MCF 10A (cell line): ENCODE measurements at regions of chr19 and their contacts with region 1.

Region 1: GRCh38 chr19:41310033-41310758 is at the start of gene CCDC97:
- DNase-seq: peak; percentile 86
- H3K4me3 Mint-ChIP-seq: peak within 1 kb of the TSS; percentile 87
- H3K27ac Mint-ChIP-seq: peak within 1 kb of the TSS; percentile 96
- H3K4me1 Mint-ChIP-seq: peaks cover 29% of the 10 kb centered on the region
- H3K27me3 Mint-ChIP-seq: no peaks in the 10 kb centered on the region
- CTCF ChIP-seq: no peak
- total RNA-seq, gene CCDC97: 25.0 and 28.5 TPM in 2 replicates

Region 2: GRCh38 chr19:41206926-41207750 is 103.1 kb before region 1 on chr19:
- CTCF ChIA-PET with region 1: interaction called, 30 read pairs
- POLR2A ChIA-PET with region 1: interaction called, 4 read pairs
- intact Hi-C with region 1: loop called (anchors 1 kb)
- DNase-seq: no peak
- H3K4me3 Mint-ChIP-seq: no peak overlapping the region
- H3K27ac Mint-ChIP-seq: peak overlapping the region; percentile 61
- H3K4me1 Mint-ChIP-seq: peaks cover 17% of the 10 kb centered on the region
- H3K27me3 Mint-ChIP-seq: no peaks in the 10 kb centered on the region
- CTCF ChIP-seq: no peak

Region 3: GRCh38 chr19:41321600-41322270 is 11.5 kb after region 1 on chr19:
- CTCF ChIA-PET with region 1: interaction called, 18 read pairs
- POLR2A ChIA-PET with region 1: interaction called, 12 read pairs
- intact Hi-C with region 1: no loop called
- DNase-seq: peak; percentile 46
- H3K4me3 Mint-ChIP-seq: no peak overlapping the region
- H3K27ac Mint-ChIP-seq: no peak overlapping the region
- H3K4me1 Mint-ChIP-seq: peaks cover 31% of the 10 kb centered on the region
- H3K27me3 Mint-ChIP-seq: no peaks in the 10 kb centered on the region
- CTCF ChIP-seq: peak; percentile 55

Region 4: DNA sequence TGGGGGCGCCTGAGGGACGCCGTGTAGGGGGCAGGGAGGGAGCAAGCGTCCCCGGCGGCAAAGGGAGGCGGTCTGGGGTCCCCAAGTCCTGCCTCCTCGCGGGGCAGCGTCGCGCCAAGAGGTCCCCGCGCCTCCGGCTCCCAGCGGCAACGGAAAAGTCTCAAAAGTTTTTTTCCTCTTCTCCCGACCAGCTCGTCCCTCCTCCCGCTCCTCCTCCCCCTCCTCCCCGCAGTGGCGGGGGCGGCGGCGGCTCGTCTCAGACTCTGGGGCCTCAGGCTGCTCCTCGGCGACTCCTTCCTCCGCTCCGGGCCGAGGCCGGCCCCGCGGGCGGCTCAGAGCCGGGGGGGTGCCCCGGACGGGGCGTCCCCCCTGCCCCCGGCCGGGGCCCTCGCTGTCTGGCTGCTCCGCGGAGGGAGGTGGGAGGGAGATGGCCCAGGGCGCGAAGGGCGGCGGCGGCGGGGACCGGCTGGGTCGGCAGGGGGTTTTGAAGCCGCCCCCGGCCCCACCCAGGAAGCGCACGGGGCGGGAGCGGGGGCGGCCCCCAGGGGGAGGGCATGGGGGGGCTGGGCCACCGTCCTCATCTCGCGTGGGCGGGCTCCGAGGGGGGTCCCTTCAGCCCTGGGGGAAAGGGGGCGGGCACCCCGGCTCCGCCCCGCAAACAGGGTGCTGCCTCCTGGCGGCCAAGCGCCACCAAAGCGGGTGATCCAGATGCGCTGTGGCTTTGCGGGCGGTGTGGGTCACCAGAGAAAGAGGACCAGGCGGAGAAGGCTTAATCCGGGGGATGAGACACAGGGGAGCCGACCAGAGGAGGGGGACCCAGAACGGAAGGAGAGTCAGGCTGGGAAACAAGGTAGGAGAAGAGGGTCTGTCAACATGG is 43.5 kb after region 1 on chr19 and contains the start of gene TGFB1:
- CTCF ChIA-PET with region 1: interaction called, 3 read pairs
- POLR2A ChIA-PET with region 1: interaction called, 19 read pairs
- intact Hi-C with region 1: loop called (anchors 5 kb)
- DNase-seq: peak; percentile 84
- H3K4me3 Mint-ChIP-seq: peak within 1 kb of the TSS; percentile 98
- H3K27ac Mint-ChIP-seq: no peak within 1 kb of the TSS
- H3K4me1 Mint-ChIP-seq: peaks cover 24% of the 10 kb centered on the region
- H3K27me3 Mint-ChIP-seq: no peaks in the 10 kb centered on the region
- CTCF ChIP-seq: peak; percentile 92
- total RNA-seq, gene TGFB1: 27.8 and 33.7 TPM in 2 replicates

Region 5: GRCh38 chr19:41479757-41480191 is 169.6 kb after region 1 on chr19:
- CTCF ChIA-PET with region 1: no interaction called
- POLR2A ChIA-PET with region 1: no interaction called
- intact Hi-C with region 1: no loop called
- DNase-seq: peak; percentile 38
- H3K4me3 Mint-ChIP-seq: no peak overlapping the region
- H3K27ac Mint-ChIP-seq: no peak overlapping the region
- H3K4me1 Mint-ChIP-seq: peaks cover 7% of the 10 kb centered on the region
- H3K27me3 Mint-ChIP-seq: peaks cover 85% of the 10 kb centered on the region
- CTCF ChIP-seq: no peak